ENCODE measurements at regions of chr4 and their contacts with region 1.

Region 1: GRCh38 chr4:118772081-118772766 is 63.7 kb downstream of the SEC24D start:
- DNase-seq: peak in 2 of 4 donors; percentile 35 to 53
- ATAC-seq: peak; percentile 86
- H3K4me3 ChIP-seq: no peak overlapping the region
- H3K27ac ChIP-seq: no peak overlapping the region
- H3K4me1 ChIP-seq: peaks cover 12 to 14% of the 10 kb centered on the region in 2 donors
- H3K27me3 ChIP-seq: no peaks in the 10 kb centered on the region
- CTCF ChIP-seq: peak; percentile 37 to 48

Region 2: GRCh38 chr4:118865091-118865708 is 93.0 kb after region 1 on chr4:
- intact Hi-C with region 1: no loop called
- DNase-seq: peak in 2 of 4 donors; percentile 33 to 47
- ATAC-seq: peak; percentile 100
- H3K4me3 ChIP-seq: no peak overlapping the region
- H3K27ac ChIP-seq: no peak overlapping the region
- H3K4me1 ChIP-seq: no peaks in the 10 kb centered on the region
- H3K27me3 ChIP-seq: no peaks in the 10 kb centered on the region
- CTCF ChIP-seq: peak; percentile 43 to 44

Region 3: DNA sequence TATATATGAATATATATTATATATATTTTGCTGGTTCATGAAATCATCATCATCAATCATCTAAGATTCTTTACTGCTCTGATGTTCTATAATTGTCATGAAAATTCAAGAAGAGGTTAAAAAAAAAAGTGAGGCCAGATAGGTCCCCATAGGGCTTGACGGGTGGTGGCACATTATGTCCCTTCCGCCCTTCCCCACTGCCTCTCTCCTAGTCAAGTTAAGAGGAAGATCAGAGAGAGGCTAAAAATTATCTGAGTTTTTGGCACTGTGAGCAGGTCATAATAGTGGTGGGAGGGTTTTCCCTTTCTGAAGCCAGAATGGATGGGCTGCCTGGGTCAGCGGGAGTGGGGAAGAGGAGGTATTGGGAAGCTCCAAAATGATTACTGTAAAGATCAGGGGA is 121.8 kb after region 1 on chr4:
- intact Hi-C with region 1: loop called in 1 of 2 experiments (anchors 5 kb)
- DNase-seq: no peak
- ATAC-seq: no peak
- H3K4me3 ChIP-seq: no peak overlapping the region
- H3K27ac ChIP-seq: no peak overlapping the region
- H3K4me1 ChIP-seq: peaks cover 0 to 6% of the 10 kb centered on the region in 2 donors
- H3K27me3 ChIP-seq: peaks cover 0 to 10% of the 10 kb centered on the region in 2 donors
- CTCF ChIP-seq: no peak

Region 4: DNA sequence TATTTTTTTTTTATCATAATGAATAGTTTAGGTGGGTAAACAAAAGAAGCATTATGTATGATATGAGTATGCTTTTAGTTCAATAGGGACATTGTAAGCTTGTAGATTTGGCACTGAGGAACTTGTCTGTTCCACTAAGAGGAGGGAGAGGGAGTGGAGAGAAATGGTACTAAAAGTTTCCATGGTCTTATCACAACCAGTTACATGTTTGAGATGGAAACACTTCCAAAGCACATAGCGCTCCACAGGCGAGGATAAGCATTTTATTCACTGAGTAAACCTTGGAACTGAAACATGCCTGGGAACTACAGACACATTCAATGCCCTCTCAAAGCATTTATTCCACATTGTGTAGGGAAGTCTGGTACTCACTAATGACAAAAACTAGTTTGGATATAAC is 378.9 kb after region 1 on chr4:
- intact Hi-C with region 1: no loop called
- DNase-seq: no peak
- ATAC-seq: no peak
- H3K4me3 ChIP-seq: no peak overlapping the region
- H3K27ac ChIP-seq: no peak overlapping the region
- H3K4me1 ChIP-seq: no peaks in the 10 kb centered on the region
- H3K27me3 ChIP-seq: no peaks in the 10 kb centered on the region
- CTCF ChIP-seq: no peak

Measured in left lung (tissue), 14 donors.